ENCODE measurements at regions of chr13 and their contacts with region 1.

Region 1: GRCh38 chr13:95191821-95192563 is 109.3 kb downstream of the ABCC4 start:
- DNase-seq: peak; percentile 29 to 74 (median 57)
- ATAC-seq: peak; percentile 65
- H3K4me3 ChIP-seq: no peak overlapping the region
- H3K4me3 Mint-ChIP-seq: no peak overlapping the region
- H3K27ac ChIP-seq: no peak overlapping the region
- H3K27ac Mint-ChIP-seq: no peak overlapping the region
- H3K4me1 ChIP-seq: no peaks in the 10 kb centered on the region
- H3K4me1 Mint-ChIP-seq: peaks cover 8% of the 10 kb centered on the region
- H3K27me3 ChIP-seq: no peaks in the 10 kb centered on the region
- H3K27me3 Mint-ChIP-seq: no peaks in the 10 kb centered on the region
- CTCF ChIP-seq: peak; percentile 54

Region 2: DNA sequence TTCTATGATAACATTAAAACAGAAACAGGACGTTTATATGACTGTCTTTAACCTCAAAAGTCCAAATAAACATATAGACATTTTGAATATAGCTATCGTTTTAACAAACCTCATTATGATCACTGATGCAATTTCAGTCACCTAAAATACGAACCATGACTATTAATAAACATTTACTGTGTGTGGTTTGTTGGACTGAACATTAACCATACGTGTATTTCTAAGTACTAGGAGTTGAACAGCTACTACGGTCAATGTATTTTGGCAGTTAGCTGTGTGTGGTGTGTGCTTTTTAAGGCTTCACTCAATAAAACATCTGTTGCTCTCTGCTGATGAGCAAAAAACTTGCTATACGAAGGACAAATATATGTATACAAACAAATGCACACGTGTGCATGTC is 172.1 kb before region 1 on chr13:
- CTCF ChIA-PET with region 1: no interaction called
- POLR2A ChIA-PET with region 1: no interaction called
- intact Hi-C with region 1: no loop called
- DNase-seq: no peak
- ATAC-seq: no peak
- H3K4me3 ChIP-seq: no peak overlapping the region
- H3K4me3 Mint-ChIP-seq: no peak overlapping the region
- H3K27ac ChIP-seq: no peak overlapping the region
- H3K27ac Mint-ChIP-seq: no peak overlapping the region
- H3K4me1 ChIP-seq: no peaks in the 10 kb centered on the region
- H3K4me1 Mint-ChIP-seq: no peaks in the 10 kb centered on the region
- H3K27me3 ChIP-seq: no peaks in the 10 kb centered on the region
- H3K27me3 Mint-ChIP-seq: no peaks in the 10 kb centered on the region
- CTCF ChIP-seq: no peak

Region 3: DNA sequence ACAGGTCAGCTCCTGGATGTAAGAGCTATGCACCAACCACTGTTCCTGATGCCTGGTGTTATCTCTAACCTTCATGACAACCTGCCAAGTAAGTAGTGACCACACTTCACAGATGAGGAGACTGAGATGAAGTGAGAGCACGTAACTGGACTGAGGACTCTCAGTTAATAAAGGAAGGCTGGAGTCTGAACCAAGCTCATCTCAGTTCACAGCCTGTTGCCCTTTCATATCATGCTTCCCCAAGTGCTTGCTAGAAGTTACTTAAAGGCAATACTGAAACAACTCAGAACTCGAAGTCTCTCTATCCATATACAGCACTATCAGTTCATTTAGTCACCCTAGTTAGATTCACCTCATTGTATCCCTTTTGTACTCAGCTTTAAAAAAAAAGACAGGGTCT is 10.4 kb before region 1 on chr13:
- CTCF ChIA-PET with region 1: interaction called, 48 read pairs
- POLR2A ChIA-PET with region 1: interaction called, 5 read pairs
- intact Hi-C with region 1: no loop called
- DNase-seq: no peak
- ATAC-seq: no peak
- H3K4me3 ChIP-seq: no peak overlapping the region
- H3K4me3 Mint-ChIP-seq: no peak overlapping the region
- H3K27ac ChIP-seq: no peak overlapping the region
- H3K27ac Mint-ChIP-seq: no peak overlapping the region
- H3K4me1 ChIP-seq: peaks cover 49% of the 10 kb centered on the region
- H3K4me1 Mint-ChIP-seq: peaks cover 82% of the 10 kb centered on the region
- H3K27me3 ChIP-seq: no peaks in the 10 kb centered on the region
- H3K27me3 Mint-ChIP-seq: no peaks in the 10 kb centered on the region
- CTCF ChIP-seq: no peak

Region 4: GRCh38 chr13:95275322-95276036 is 83.5 kb after region 1 on chr13:
- CTCF ChIA-PET with region 1: no interaction called
- POLR2A ChIA-PET with region 1: no interaction called
- intact Hi-C with region 1: no loop called
- DNase-seq: no peak
- ATAC-seq: no peak
- H3K4me3 ChIP-seq: no peak overlapping the region
- H3K4me3 Mint-ChIP-seq: no peak overlapping the region
- H3K27ac ChIP-seq: no peak overlapping the region
- H3K27ac Mint-ChIP-seq: peak overlapping the region; percentile 27
- H3K4me1 ChIP-seq: no peaks in the 10 kb centered on the region
- H3K4me1 Mint-ChIP-seq: peaks cover 4% of the 10 kb centered on the region
- H3K27me3 ChIP-seq: no peaks in the 10 kb centered on the region
- H3K27me3 Mint-ChIP-seq: no peaks in the 10 kb centered on the region
- CTCF ChIP-seq: no peak

Region 5: DNA sequence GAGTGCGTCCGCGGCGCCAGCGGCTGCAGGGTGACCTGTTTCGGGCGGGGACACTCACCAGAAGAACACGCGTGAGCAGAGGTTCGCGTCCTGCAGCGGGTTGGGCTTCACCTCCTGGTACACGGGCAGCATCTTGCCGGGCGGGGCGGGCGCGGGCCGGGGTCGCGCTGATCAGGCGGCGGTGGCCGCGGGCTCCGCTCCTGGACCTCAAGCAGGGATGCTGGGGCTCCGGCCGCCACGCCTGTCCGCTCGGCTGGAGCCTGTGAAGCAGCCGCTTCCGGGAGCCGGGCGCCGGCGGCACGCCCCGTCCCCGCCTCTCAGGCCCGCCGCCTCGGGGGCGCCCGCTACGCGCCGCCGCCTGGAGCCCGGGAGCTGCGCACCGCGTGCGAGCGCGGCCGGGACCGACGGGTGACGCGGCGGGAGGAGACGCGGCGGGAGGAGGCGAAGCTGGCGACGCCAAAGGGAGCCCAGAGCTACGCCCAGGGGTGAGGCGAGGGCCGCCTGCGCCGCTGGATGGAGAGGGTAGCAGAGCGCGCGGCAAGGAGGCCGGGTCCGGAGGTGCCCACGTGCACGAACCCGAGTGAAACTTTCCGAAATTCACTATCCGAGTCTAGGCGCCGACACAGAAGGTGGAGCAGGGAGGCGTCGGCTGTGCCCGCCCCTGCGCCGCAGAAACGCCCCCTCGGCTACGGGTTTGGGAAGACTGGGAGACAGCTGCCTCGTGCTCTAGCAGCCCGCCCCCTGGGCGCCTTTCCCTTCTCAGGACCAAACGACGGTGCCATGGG is 109.4 kb after region 1 on chr13 and contains the start of gene ABCC4:
- CTCF ChIA-PET with region 1: interaction called, 3 read pairs
- POLR2A ChIA-PET with region 1: no interaction called
- intact Hi-C with region 1: loop called in 1 of 2 experiments (anchors 2 kb)
- DNase-seq: peak in 8 of 9 experiments; percentile 33 to 75 (median 50)
- ATAC-seq: peak; percentile 77
- H3K4me3 ChIP-seq: peak within 1 kb of the TSS; percentile 74 to 79
- H3K4me3 Mint-ChIP-seq: peak within 1 kb of the TSS; percentile 82
- H3K27ac ChIP-seq: no peak within 1 kb of the TSS
- H3K27ac Mint-ChIP-seq: peak within 1 kb of the TSS; percentile 12
- H3K4me1 ChIP-seq: peaks cover 8% of the 10 kb centered on the region
- H3K4me1 Mint-ChIP-seq: peaks cover 24% of the 10 kb centered on the region
- H3K27me3 ChIP-seq: no peaks in the 10 kb centered on the region
- H3K27me3 Mint-ChIP-seq: no peaks in the 10 kb centered on the region
- CTCF ChIP-seq: no peak
- total RNA-seq, gene ABCC4: 3.3 to 3.4 TPM

Region 6: GRCh38 chr13:95388420-95389079 is 196.6 kb after region 1 on chr13:
- CTCF ChIA-PET with region 1: interaction called, 150 read pairs
- POLR2A ChIA-PET with region 1: interaction called, 3 read pairs
- intact Hi-C with region 1: no loop called
- DNase-seq: no peak
- ATAC-seq: no peak
- H3K4me3 ChIP-seq: no peak overlapping the region
- H3K4me3 Mint-ChIP-seq: no peak overlapping the region
- H3K27ac ChIP-seq: no peak overlapping the region
- H3K27ac Mint-ChIP-seq: no peak overlapping the region
- H3K4me1 ChIP-seq: no peaks in the 10 kb centered on the region
- H3K4me1 Mint-ChIP-seq: no peaks in the 10 kb centered on the region
- H3K27me3 ChIP-seq: no peaks in the 10 kb centered on the region
- H3K27me3 Mint-ChIP-seq: peaks cover 17% of the 10 kb centered on the region
- CTCF ChIP-seq: no peak